ENCODE measurements at regions of chr2 and their contacts with region 1.

Region 1: DNA sequence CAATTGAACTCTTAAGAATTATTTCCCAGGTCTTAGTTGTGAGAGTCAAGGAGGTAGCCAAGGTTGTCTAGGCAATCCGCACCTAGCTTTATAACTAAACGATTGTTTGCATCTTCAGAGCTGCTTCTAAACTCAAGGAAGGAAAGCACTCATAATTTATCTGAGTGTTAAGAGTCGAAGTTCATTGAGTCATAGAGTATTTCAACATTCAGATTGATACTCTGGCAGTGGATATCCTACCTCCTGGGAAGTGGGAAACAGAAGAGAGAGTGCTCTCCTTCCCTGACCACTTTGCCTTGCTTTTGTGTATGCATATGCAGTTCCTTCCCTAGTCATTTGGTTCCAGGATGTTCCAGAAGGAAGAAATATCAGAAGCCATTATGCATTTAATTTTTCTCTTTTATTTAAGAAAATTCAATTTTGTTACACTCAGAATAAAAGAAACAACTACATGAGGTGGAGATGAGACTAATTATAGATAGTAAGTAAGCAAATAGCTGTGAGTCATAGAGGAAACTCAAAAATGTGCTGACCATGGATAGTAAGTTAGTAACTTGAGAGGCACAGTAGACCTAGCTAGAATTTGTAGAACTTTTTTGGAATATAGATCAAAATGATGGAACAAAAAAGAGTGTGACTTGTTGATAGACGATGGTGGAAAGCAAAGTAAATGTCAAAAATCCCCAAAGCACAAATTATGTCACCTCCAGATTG is 35.4 kb upstream of the FSHR start:
- DNase-seq: no peak
- H3K4me3 ChIP-seq: no peak overlapping the region
- CTCF ChIP-seq: no peak
- POLR2A ChIP-seq: no peak

Region 2: GRCh38 chr2:49035477-49035876 is 154.2 kb before region 1 on chr2:
- intact Hi-C with region 1: no loop called
- DNase-seq: no peak
- H3K4me3 ChIP-seq: no peak overlapping the region
- CTCF ChIP-seq: no peak
- POLR2A ChIP-seq: no peak

Region 3: DNA sequence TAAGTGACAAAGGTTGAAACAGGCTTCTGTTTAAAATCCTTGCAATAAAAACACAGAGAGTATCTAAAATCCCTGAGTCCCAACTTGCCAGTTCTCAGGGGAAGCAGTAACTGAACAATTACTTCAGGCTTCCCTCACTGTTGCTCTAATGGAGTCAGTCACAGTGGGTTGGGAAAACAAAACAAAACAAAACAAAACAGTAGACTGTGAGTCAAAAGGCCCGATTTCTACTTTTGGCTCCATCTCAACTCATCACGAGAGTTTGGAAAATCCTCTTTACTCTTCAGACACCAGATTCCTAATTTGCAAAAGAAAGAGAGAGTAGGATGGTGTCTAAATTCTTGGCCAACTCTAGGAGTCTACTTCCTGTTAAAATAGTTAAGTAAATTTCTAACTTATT is 36.4 kb before region 1 on chr2:
- intact Hi-C with region 1: no loop called
- DNase-seq: no peak
- H3K4me3 ChIP-seq: no peak overlapping the region
- CTCF ChIP-seq: no peak
- POLR2A ChIP-seq: no peak

Region 4: DNA sequence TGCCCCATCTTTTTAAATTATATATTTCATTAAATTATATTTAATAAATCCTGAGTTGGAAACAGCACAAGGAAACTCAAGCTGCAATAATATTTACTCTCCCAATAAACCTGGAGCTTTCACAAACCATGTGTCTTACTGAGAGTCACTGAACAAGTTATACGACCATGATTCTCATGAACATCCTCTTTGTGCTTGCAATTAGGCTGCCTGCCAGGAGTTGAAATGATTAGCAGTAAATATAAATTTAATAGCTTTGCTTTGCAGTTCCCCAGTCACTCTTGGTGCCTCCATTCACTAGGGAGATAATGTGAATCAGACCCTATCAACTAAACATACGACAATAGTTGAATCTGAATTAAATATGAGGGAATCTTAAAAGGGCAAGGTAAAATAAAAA is 937.2 kb after region 1 on chr2:
- intact Hi-C with region 1: loop called (anchors 5 kb)
- DNase-seq: peak in 1 of 2 donors; percentile 26
- H3K4me3 ChIP-seq: no peak overlapping the region
- CTCF ChIP-seq: no peak
- POLR2A ChIP-seq: no peak

Measured in lower leg skin (tissue), 4 donors.